ENCODE measurements at regions of chr22 and their contacts with region 1.

Region 1: GRCh38 chr22:20016734-20017621 is at the start of gene ARVCF:
- DNase-seq: peak; percentile 94
- ATAC-seq: peak; percentile 72
- H3K4me3 Mint-ChIP-seq: peak within 1 kb of the TSS; percentile 78
- H3K27ac Mint-ChIP-seq: peak within 1 kb of the TSS; percentile 25
- H3K4me1 Mint-ChIP-seq: peaks cover 15% of the 10 kb centered on the region
- H3K27me3 Mint-ChIP-seq: peaks cover 6% of the 10 kb centered on the region
- total RNA-seq, gene ARVCF: 1.3 to 2.1 TPM

Region 2: GRCh38 chr22:19291580-19292457 is 725.2 kb before region 1 on chr22 and contains the start of gene CLTCL1:
- CTCF ChIA-PET with region 1: no interaction called
- POLR2A ChIA-PET with region 1: no interaction called
- intact Hi-C with region 1: loop called in 1 of 2 experiments (anchors 5 kb)
- DNase-seq: peak; percentile 85
- ATAC-seq: peak; percentile 75
- H3K4me3 Mint-ChIP-seq: peak within 1 kb of the TSS; percentile 87
- H3K27ac Mint-ChIP-seq: peak within 1 kb of the TSS; percentile 65
- H3K4me1 Mint-ChIP-seq: peaks cover 12% of the 10 kb centered on the region
- H3K27me3 Mint-ChIP-seq: peaks cover 24% of the 10 kb centered on the region
- total RNA-seq, gene CLTCL1: 0.76 to 1.2 TPM

Region 3: GRCh38 chr22:19891317-19892256 is 125.4 kb before region 1 on chr22:
- CTCF ChIA-PET with region 1: no interaction called
- POLR2A ChIA-PET with region 1: no interaction called
- intact Hi-C with region 1: loop called in 1 of 2 experiments (anchors 1 kb)
- DNase-seq: peak; percentile 92
- ATAC-seq: peak; percentile 75
- H3K4me3 Mint-ChIP-seq: peak overlapping the region; percentile 72
- H3K27ac Mint-ChIP-seq: peak overlapping the region; percentile 95
- H3K4me1 Mint-ChIP-seq: peaks cover 86% of the 10 kb centered on the region
- H3K27me3 Mint-ChIP-seq: no peaks in the 10 kb centered on the region

Region 4: GRCh38 chr22:19970479-19971275 is 46.3 kb before region 1 on chr22:
- CTCF ChIA-PET with region 1: interaction called, 14 read pairs
- POLR2A ChIA-PET with region 1: interaction called, 3 read pairs
- intact Hi-C with region 1: loop called (anchors 1 kb)
- DNase-seq: peak; percentile 86
- ATAC-seq: peak; percentile 86
- H3K4me3 Mint-ChIP-seq: no peak overlapping the region
- H3K27ac Mint-ChIP-seq: no peak overlapping the region
- H3K4me1 Mint-ChIP-seq: peaks cover 11% of the 10 kb centered on the region
- H3K27me3 Mint-ChIP-seq: no peaks in the 10 kb centered on the region

Region 5: GRCh38 chr22:20102203-20102780 is 85.3 kb after region 1 on chr22:
- CTCF ChIA-PET with region 1: interaction called, 3 read pairs
- POLR2A ChIA-PET with region 1: interaction called, 5 read pairs
- intact Hi-C with region 1: loop called in 1 of 2 experiments (anchors 1 kb)
- DNase-seq: no peak
- ATAC-seq: no peak
- H3K4me3 Mint-ChIP-seq: no peak overlapping the region
- H3K27ac Mint-ChIP-seq: peak overlapping the region; percentile 83
- H3K4me1 Mint-ChIP-seq: peaks cover 49% of the 10 kb centered on the region
- H3K27me3 Mint-ChIP-seq: no peaks in the 10 kb centered on the region

Region 6: DNA sequence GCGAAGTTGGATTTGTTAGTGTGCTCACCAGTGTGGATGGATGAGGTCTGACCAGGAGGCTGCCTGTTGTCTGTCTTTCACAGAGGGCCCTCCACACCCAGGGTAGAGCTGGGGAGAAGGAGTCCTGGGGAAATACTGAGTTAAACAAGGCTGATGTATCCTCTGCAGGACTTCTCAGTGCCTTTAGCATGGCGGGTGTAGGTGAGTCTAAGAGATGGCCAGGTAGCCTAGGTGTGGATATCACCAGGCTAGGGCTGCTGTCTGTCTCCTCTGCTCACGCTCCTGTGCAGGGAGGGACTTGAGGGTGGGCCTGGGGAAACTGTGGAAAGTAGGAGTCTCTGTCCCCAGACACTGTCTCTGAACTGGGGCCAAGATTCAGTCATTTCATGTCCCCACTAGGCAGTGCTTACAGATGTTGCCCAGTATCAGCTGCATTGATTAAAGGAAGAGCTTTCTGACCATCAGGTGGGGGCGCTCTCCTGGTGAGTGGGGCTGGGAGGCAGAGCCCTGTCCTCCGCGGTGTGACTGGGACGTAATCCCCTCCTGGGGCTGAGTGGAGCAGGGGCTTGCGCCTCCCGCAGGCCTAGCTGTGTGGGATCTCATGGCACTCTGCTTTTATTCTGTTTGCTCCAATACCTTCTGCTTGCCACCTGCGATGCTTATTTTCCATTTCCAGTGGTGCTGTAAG is 169.3 kb after region 1 on chr22:
- CTCF ChIA-PET with region 1: no interaction called
- POLR2A ChIA-PET with region 1: no interaction called
- intact Hi-C with region 1: no loop called
- DNase-seq: no peak
- ATAC-seq: no peak
- H3K4me3 Mint-ChIP-seq: no peak overlapping the region
- H3K27ac Mint-ChIP-seq: no peak overlapping the region
- H3K4me1 Mint-ChIP-seq: no peaks in the 10 kb centered on the region
- H3K27me3 Mint-ChIP-seq: no peaks in the 10 kb centered on the region

Region 7: GRCh38 chr22:21001560-21002325 is 984.8 kb after region 1 on chr22 and contains the start of gene THAP7:
- CTCF ChIA-PET with region 1: no interaction called
- POLR2A ChIA-PET with region 1: no interaction called
- intact Hi-C with region 1: loop called in 1 of 2 experiments (anchors 5 kb)
- DNase-seq: peak; percentile 99
- ATAC-seq: peak; percentile 92
- H3K4me3 Mint-ChIP-seq: peak within 1 kb of the TSS; percentile 92
- H3K27ac Mint-ChIP-seq: peak within 1 kb of the TSS; percentile 96
- H3K4me1 Mint-ChIP-seq: peaks cover 19% of the 10 kb centered on the region
- H3K27me3 Mint-ChIP-seq: no peaks in the 10 kb centered on the region
- total RNA-seq, gene THAP7: 25.1 to 27.2 TPM